ENCODE measurements at regions of chr4 and their contacts with region 1.

Region 1: DNA sequence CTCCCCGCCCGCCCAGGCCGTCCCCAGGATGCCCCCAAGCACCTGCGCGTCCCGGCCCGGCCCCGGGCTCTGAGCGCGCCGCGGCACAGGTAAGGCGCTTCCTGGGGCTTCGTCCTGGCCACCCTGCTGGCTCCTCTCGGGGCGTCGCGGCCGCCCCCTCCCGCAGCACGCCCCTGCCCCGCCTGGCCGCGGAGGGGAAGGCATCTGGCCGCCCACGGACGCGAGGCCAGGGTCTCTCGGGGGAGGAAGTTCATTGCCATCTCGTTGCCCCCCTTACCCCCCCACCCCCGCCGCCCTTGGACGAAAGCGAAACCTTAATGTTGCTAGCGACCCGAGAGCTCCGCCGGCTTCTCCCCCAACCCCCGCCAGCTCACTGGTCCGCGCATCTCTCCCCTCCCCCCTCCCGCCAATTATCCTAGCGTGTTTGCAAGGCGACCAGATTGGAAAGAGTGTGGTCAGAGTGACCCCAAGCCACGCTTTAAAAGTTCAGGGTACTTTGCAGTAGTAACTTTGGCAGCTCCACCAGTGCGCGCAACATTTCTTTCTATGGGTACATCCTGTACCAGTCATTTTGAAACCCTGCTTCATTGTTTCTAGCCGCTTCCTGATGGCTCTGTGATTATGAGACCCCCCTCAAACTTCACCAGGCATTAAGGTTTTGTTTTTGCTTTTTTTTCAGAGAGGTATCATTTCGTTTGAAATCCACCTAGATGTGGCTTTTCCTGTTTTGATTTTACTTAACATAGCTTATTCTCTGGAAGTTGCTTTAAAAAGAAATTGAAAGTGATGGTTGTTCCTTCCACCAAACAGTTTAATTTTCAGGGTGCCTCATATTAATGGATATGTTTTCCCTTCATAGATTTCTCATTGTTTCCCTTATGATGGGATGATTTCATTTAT is 626 bp downstream of the TBC1D1 start:
- DNase-seq: peak; percentile 57 to 83
- H3K4me3 ChIP-seq: peak overlapping the region; percentile 84 to 94
- H3K27ac ChIP-seq: peak overlapping the region; percentile 94 to 98
- H3K4me1 ChIP-seq: peaks cover 0 to 58% (median 16%) of the 10 kb centered on the region in 4 donors
- H3K27me3 ChIP-seq: no peaks in the 10 kb centered on the region
- CTCF ChIP-seq: no peak

Region 2: GRCh38 chr4:37686373-37687193 is 204.9 kb before region 1 on chr4 and contains the start of gene RELL1:
- intact Hi-C with region 1: loop called (anchors 2 kb)
- DNase-seq: peak; percentile 99 to 100
- H3K4me3 ChIP-seq: peak within 1 kb of the TSS; percentile 68 to 91
- H3K27ac ChIP-seq: peak within 1 kb of the TSS; percentile 85 to 98
- H3K4me1 ChIP-seq: peaks cover 0 to 24% (median 12%) of the 10 kb centered on the region in 4 donors
- H3K27me3 ChIP-seq: no peaks in the 10 kb centered on the region
- CTCF ChIP-seq: no peak

Region 3: DNA sequence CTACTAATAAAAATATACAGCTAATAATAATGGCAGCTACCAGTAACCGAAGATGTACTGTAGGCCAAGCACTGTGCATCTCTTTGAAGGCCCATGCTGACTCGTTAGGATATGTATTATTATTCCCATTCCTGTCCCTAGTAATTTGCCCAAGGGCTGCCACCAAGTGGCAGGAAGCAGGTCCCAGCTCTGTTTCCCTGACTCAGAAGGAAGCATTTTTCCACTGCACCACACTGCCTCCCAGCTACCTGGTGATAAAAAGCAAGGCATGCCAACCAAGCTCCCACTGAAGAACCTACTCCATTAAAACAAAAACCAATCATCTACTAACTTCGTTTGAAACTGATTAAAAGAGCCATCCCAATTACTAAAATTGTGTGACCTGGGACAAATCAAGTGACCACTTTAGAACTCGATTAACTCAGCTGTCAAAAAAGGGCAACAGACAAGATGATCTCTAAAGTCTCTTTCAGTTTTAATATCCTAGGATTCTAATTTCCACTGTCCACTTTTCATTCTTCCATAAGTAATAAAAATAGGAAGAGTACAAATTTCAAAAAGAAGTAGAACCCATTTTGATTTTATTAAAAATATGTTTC is 89.3 kb before region 1 on chr4:
- intact Hi-C with region 1: loop called (anchors 10 kb)
- DNase-seq: peak; percentile 23 to 75
- H3K4me3 ChIP-seq: no peak overlapping the region
- H3K27ac ChIP-seq: no peak overlapping the region
- H3K4me1 ChIP-seq: no peaks in the 10 kb centered on the region
- H3K27me3 ChIP-seq: no peaks in the 10 kb centered on the region
- CTCF ChIP-seq: peak; percentile 48 to 56

Region 4: GRCh38 chr4:37826295-37827029 is 65.0 kb before region 1 on chr4 and contains the start of gene PGM2:
- intact Hi-C with region 1: loop called (anchors 2 kb)
- DNase-seq: peak; percentile 82 to 93
- H3K4me3 ChIP-seq: peak within 1 kb of the TSS; percentile 71 to 91
- H3K27ac ChIP-seq: peak within 1 kb of the TSS; percentile 85 to 93
- H3K4me1 ChIP-seq: peaks cover 0 to 22% (median 13%) of the 10 kb centered on the region in 4 donors
- H3K27me3 ChIP-seq: no peaks in the 10 kb centered on the region
- CTCF ChIP-seq: no peak

Region 5: GRCh38 chr4:37936889-37937498 is 45.5 kb after region 1 on chr4:
- intact Hi-C with region 1: no loop called
- DNase-seq: peak; percentile 34 to 80
- H3K4me3 ChIP-seq: no peak overlapping the region
- H3K27ac ChIP-seq: peak overlapping the region; percentile 30 to 43
- H3K4me1 ChIP-seq: peaks cover 0 to 34% (median 14%) of the 10 kb centered on the region in 4 donors
- H3K27me3 ChIP-seq: no peaks in the 10 kb centered on the region
- CTCF ChIP-seq: peak in 1 of 2 experiments; percentile 6

Region 6: DNA sequence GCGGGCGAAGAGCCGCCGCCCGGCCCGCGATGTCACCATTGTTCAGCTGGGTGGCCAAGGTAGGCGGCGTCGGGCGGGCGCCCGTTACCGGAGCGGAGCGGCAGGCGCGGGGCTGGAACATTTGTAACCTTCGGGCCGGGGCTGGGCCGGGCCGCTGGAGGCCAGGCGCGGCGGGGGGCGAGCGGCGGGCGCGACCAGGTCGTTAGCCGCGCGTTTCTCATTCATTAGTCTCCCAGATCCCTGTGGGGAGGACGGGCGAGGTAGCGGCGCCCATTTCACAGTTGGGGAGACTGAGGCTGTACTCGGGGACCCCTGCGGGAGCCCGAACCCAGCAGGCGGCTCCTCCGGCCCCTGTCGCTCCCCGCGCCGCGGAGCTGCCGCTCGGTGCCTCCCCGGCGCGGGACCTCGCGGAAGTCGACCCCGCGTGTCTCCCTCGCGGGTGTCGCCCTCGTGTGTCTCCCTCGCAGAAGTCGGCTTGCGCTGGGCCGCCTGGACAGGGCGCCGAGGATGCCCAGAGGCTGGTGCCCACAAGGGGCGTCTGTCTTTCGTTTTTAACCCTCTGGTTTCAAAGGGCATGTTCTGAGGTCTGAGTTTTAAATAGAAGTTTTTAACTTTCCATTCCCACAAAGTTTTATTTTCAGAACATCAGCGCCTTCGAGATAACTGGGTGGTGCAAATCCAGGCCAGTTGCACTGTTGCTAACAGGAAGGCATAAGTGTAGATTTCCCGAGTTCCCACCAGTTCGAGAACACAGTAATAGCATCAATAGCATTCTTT is 86.1 kb after region 1 on chr4:
- intact Hi-C with region 1: loop called (anchors 2 kb)
- DNase-seq: peak; percentile 68 to 85
- H3K4me3 ChIP-seq: peak overlapping the region; percentile 82 to 95
- H3K27ac ChIP-seq: peak overlapping the region; percentile 93 to 97
- H3K4me1 ChIP-seq: peaks cover 0 to 70% (median 28%) of the 10 kb centered on the region in 4 donors
- H3K27me3 ChIP-seq: no peaks in the 10 kb centered on the region
- CTCF ChIP-seq: peak; percentile 66 to 77

Region 7: DNA sequence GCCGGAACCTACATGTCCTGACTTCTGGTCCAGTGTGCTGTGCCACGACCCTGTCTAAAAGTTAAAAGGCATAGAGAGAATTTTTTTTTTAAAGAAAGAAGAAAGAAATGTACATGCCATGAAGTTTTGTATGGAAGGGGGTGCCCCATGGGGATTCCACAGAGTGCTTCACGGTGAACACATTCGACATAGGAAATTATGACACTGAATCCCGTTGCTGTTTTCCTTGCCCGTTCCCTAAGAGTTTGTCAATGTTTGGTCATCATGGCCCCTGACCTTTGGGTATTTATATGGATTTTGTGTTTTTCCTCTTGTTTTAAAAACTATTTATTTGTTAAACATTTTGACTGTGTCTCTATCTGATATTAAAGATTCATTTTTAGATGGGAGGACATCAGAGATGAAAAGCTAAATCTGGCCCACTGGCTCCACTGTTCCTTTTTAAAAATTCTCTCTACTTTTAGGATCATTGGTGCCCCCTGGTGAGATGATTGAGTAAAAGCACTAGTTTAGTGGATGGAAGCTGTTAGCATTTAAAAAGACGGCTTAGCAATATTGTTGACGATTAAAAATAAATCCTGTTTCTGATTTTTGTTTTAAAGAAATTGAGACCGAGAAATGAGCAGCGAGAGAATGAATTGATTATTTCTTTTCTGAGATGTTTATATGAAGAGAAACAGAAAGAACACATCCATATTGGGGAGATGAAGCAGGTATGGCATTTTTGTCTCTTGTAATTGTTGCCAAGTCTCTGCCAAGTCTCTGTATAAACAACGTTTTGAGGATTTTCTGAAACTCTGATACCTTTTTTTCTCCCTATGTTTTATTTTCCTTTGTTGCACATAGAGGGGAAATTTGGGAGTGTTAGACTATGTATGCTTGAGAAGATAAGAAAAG is 143.7 kb after region 1 on chr4:
- intact Hi-C with region 1: loop called (anchors 10 kb)
- DNase-seq: no peak
- H3K4me3 ChIP-seq: no peak overlapping the region
- H3K27ac ChIP-seq: peak overlapping the region; percentile 42 to 52
- H3K4me1 ChIP-seq: peaks cover 0 to 6% (median 3%) of the 10 kb centered on the region in 4 donors
- H3K27me3 ChIP-seq: no peaks in the 10 kb centered on the region
- CTCF ChIP-seq: peak; percentile 69 to 85